ENCODE measurements at regions of chrX and their contacts with region 1.

Region 1: DNA sequence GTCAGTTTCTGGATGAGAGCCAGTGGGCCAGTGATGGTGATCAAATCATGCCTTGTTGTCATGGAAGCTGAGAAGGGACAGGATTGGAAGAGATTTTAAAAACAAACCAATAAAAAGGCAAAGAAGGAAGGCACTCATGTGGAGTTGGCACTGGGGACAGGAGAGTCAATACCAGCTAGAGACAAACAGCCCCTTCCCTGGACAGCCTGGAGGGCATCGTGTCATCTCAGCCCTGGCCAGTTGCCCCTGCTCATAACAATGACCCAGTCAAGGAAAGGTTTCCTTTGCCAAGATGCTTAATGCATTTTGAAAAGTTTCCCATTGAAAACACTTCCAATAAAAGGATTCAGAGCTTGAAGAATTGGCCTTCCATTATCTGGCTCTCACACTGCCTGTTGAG is 55.5 kb downstream of the SCML1 start:
- DNase-seq: no peak
- H3K4me3 ChIP-seq: no peak overlapping the region
- H3K27ac ChIP-seq: no peak overlapping the region
- H3K4me1 ChIP-seq: no peaks in the 10 kb centered on the region
- H3K27me3 ChIP-seq: no peaks in the 10 kb centered on the region
- CTCF ChIP-seq: no peak
- EP300 ChIP-seq: no peak
- POLR2A ChIP-seq: no peak

Region 2: GRCh38 chrX:18210470-18210869 is 417.6 kb after region 1 on chrX:
- intact Hi-C with region 1: loop called (anchors 10 kb)
- DNase-seq: no peak
- H3K4me3 ChIP-seq: no peak overlapping the region
- H3K27ac ChIP-seq: no peak overlapping the region
- H3K4me1 ChIP-seq: no peaks in the 10 kb centered on the region
- H3K27me3 ChIP-seq: no peaks in the 10 kb centered on the region
- CTCF ChIP-seq: no peak
- EP300 ChIP-seq: no peak
- POLR2A ChIP-seq: no peak